Calu3 (cell line): ENCODE measurements at regions of chr10 and their contacts with region 1.

Region 1: GRCh38 chr10:6401562-6402348 is 178.3 kb downstream of the PRKCQ start:
- DNase-seq: peak; percentile 78
- H3K4me3 Mint-ChIP-seq: peak overlapping the region; percentile 61
- H3K27ac Mint-ChIP-seq: peak overlapping the region; percentile 90
- H3K4me1 Mint-ChIP-seq: peaks cover 66% of the 10 kb centered on the region
- H3K27me3 Mint-ChIP-seq: no peaks in the 10 kb centered on the region
- CTCF ChIP-seq: peak; percentile 67

Region 2: DNA sequence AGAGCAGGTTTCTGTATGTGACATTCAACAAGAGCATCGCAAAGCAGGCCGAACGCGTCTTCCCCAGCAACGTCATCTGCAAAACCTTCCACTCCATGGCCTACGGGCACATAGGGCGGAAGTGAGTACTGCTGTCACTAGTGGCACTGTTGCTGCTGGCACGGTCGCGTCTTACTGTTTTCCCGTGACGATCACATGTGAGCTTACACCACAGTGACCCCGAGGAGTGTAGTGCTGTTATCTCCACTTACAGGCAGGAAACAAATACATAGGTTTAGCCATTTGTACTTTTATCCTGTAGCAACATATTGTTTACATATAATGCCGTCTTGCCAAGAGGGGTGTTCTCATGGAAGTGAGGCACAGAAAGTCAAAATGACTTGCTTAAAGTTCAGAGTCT is 486.3 kb before region 1 on chr10:
- CTCF ChIA-PET with region 1: no interaction called
- intact Hi-C with region 1: no loop called
- DNase-seq: no peak
- H3K4me3 Mint-ChIP-seq: no peak overlapping the region
- H3K27ac Mint-ChIP-seq: no peak overlapping the region
- H3K4me1 Mint-ChIP-seq: no peaks in the 10 kb centered on the region
- H3K27me3 Mint-ChIP-seq: no peaks in the 10 kb centered on the region
- CTCF ChIP-seq: no peak

Region 3: GRCh38 chr10:6014241-6014761 is 387.5 kb before region 1 on chr10:
- CTCF ChIA-PET with region 1: interaction called, 3 read pairs
- intact Hi-C with region 1: loop called (anchors 10 kb)
- DNase-seq: peak; percentile 64
- H3K4me3 Mint-ChIP-seq: no peak overlapping the region
- H3K27ac Mint-ChIP-seq: no peak overlapping the region
- H3K4me1 Mint-ChIP-seq: no peaks in the 10 kb centered on the region
- H3K27me3 Mint-ChIP-seq: peaks cover 42% of the 10 kb centered on the region
- CTCF ChIP-seq: peak; percentile 53

Region 4: GRCh38 chr10:6202684-6203330 is 198.9 kb before region 1 on chr10 and contains the start of gene PFKFB3:
- CTCF ChIA-PET with region 1: interaction called, 91 read pairs
- intact Hi-C with region 1: loop called (anchors 1 kb)
- DNase-seq: peak; percentile 99
- H3K4me3 Mint-ChIP-seq: peak within 1 kb of the TSS; percentile 84
- H3K27ac Mint-ChIP-seq: peak within 1 kb of the TSS; percentile 84
- H3K4me1 Mint-ChIP-seq: peaks cover 5% of the 10 kb centered on the region
- H3K27me3 Mint-ChIP-seq: no peaks in the 10 kb centered on the region
- CTCF ChIP-seq: peak; percentile 95
- total RNA-seq, gene PFKFB3: 273 and 293 TPM in 2 replicates

Region 5: GRCh38 chr10:6275022-6275997 is 126.4 kb before region 1 on chr10:
- CTCF ChIA-PET with region 1: interaction called, 27 read pairs
- intact Hi-C with region 1: no loop called
- DNase-seq: peak; percentile 95
- H3K4me3 Mint-ChIP-seq: peak overlapping the region; percentile 65
- H3K27ac Mint-ChIP-seq: peak overlapping the region; percentile 99
- H3K4me1 Mint-ChIP-seq: peaks cover 58% of the 10 kb centered on the region
- H3K27me3 Mint-ChIP-seq: no peaks in the 10 kb centered on the region
- CTCF ChIP-seq: no peak

Region 6: DNA sequence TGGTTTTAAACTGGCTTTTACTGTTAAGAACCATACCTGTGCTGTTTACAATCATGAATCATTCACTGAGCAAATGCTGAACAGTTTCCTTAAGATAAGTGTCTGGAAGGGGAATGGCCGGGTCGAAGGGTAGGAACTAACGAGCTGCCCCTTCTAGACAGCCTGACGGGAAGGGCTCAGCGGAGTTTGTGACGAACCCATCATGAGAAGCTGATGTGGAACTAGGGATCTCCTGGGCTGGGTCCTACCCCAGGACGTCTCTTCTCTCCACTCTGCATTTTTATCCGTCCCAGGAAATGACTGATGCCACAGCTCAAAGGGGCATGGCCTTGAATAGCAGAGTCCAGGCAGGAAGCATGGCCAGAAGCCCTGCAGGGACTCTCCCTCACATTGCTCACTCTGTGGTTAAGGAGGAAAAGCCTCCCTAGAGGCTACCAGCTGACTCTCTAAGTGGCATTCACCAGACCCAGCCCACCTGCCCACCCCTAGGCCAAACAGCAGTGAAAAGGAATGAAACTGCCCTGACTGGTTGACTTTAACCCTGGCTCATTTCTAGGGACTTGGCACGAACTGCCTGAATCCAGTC is 87.0 kb before region 1 on chr10:
- CTCF ChIA-PET with region 1: interaction called, 12 read pairs
- intact Hi-C with region 1: no loop called
- DNase-seq: peak; percentile 79
- H3K4me3 Mint-ChIP-seq: peak overlapping the region; percentile 66
- H3K27ac Mint-ChIP-seq: peak overlapping the region; percentile 95
- H3K4me1 Mint-ChIP-seq: peaks cover 59% of the 10 kb centered on the region
- H3K27me3 Mint-ChIP-seq: no peaks in the 10 kb centered on the region
- CTCF ChIP-seq: no peak

Region 7: DNA sequence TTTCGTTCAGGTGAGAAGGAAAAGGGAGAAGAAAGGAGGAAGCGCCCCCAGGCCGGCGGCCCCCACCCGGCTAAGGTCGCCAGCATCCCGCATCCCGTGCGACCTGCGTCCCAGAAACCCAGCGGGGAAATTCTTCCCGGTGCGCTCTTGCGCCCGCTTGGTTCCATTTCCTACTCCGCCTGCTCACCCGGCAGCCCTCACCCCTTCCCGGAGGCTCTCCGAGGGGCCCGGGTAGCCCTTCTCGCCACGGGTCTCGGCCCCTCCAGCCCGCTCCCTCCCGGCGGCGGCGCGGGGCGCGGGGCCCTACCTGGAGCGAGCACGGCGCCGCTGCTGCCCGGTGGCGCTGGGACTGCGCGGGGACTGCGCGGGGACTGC is 178.1 kb after region 1 on chr10 and contains the start of gene PRKCQ:
- CTCF ChIA-PET with region 1: no interaction called
- intact Hi-C with region 1: no loop called
- DNase-seq: no peak
- H3K4me3 Mint-ChIP-seq: peak within 1 kb of the TSS; percentile 79
- H3K27ac Mint-ChIP-seq: peak within 1 kb of the TSS; percentile 39
- H3K4me1 Mint-ChIP-seq: no peaks in the 10 kb centered on the region
- H3K27me3 Mint-ChIP-seq: peaks cover 49% of the 10 kb centered on the region
- CTCF ChIP-seq: no peak
- total RNA-seq, gene PRKCQ: 0.73 and 1.1 TPM in 2 replicates